ENCODE measurements at regions of chr13 and their contacts with region 1.

Region 1: GRCh38 chr13:99709134-99709533 is 207.9 kb downstream of the TM9SF2 start:
- DNase-seq: no peak
- ATAC-seq: no peak
- H3K4me3 ChIP-seq: no peak overlapping the region
- H3K27ac ChIP-seq: no peak overlapping the region
- H3K4me1 ChIP-seq: no peaks in the 10 kb centered on the region
- H3K27me3 ChIP-seq: no peaks in the 10 kb centered on the region
- CTCF ChIP-seq: no peak

Region 2: GRCh38 chr13:99501184-99501847 is 207.8 kb before region 1 on chr13 and contains the start of gene TM9SF2:
- intact Hi-C with region 1: no loop called
- DNase-seq: peak; percentile 98 to 99
- ATAC-seq: peak; percentile 82 to 88 (median 86)
- H3K4me3 ChIP-seq: peak within 1 kb of the TSS; percentile 82
- H3K27ac ChIP-seq: peak within 1 kb of the TSS; percentile 90
- H3K4me1 ChIP-seq: peaks cover 65% of the 10 kb centered on the region
- H3K27me3 ChIP-seq: no peaks in the 10 kb centered on the region
- CTCF ChIP-seq: no peak
- total RNA-seq, gene TM9SF2: 30.6 to 45.2 (median 42.7) TPM

Region 3: DNA sequence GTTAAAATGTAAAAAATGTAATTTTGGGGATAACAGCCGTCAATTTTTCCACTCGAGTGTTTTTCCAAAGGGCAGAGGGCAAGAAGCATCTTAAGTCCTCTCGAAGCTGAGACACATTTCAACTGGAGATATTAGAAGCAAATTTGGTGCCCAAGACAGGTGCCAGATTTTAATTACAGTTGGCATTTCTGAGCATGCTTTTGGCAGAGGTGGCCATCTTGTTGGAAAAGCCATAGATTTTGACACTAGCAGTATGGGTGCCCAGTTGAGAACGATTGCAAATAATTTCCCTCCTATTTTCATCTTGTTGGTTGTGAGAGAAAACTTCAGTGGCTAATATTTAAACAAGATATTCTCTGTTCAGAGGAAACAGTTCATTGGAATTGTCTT is 61.5 kb before region 1 on chr13:
- intact Hi-C with region 1: no loop called
- DNase-seq: no peak
- ATAC-seq: no peak
- H3K4me3 ChIP-seq: no peak overlapping the region
- H3K27ac ChIP-seq: no peak overlapping the region
- H3K4me1 ChIP-seq: no peaks in the 10 kb centered on the region
- H3K27me3 ChIP-seq: no peaks in the 10 kb centered on the region
- CTCF ChIP-seq: no peak

Region 4: DNA sequence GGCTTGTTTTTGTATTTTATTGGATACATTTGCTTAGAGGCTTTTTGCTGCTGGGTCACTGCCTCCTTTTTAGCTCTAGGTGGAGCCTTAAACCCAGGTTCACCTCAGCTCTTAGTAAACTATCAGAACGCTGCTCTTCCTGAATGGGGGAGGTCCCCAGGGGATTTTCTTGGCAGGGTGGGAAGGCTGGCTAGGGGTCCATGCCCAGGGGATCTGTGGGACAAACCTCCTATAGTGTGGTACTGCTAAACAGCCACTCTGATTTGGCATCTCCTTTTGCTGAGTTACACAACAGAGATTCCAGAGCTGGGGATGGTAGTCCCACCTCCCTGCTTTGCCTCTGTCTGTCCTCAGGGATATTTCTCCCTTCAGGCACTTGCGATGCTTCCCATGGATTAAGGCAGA is 57.5 kb after region 1 on chr13:
- intact Hi-C with region 1: loop called in 1 of 2 experiments (anchors 2 kb)
- DNase-seq: no peak
- ATAC-seq: no peak
- H3K4me3 ChIP-seq: no peak overlapping the region
- H3K27ac ChIP-seq: no peak overlapping the region
- H3K4me1 ChIP-seq: no peaks in the 10 kb centered on the region
- H3K27me3 ChIP-seq: no peaks in the 10 kb centered on the region
- CTCF ChIP-seq: no peak

Region 5: GRCh38 chr13:100646030-100646673 is 937.0 kb after region 1 on chr13:
- intact Hi-C with region 1: no loop called
- DNase-seq: no peak
- ATAC-seq: no peak
- H3K4me3 ChIP-seq: no peak overlapping the region
- H3K27ac ChIP-seq: no peak overlapping the region
- H3K4me1 ChIP-seq: peaks cover 8% of the 10 kb centered on the region
- H3K27me3 ChIP-seq: no peaks in the 10 kb centered on the region
- CTCF ChIP-seq: no peak